IMR-90 (cell line): ENCODE measurements at regions of chr15 and their contacts with region 1.

Region 1: DNA sequence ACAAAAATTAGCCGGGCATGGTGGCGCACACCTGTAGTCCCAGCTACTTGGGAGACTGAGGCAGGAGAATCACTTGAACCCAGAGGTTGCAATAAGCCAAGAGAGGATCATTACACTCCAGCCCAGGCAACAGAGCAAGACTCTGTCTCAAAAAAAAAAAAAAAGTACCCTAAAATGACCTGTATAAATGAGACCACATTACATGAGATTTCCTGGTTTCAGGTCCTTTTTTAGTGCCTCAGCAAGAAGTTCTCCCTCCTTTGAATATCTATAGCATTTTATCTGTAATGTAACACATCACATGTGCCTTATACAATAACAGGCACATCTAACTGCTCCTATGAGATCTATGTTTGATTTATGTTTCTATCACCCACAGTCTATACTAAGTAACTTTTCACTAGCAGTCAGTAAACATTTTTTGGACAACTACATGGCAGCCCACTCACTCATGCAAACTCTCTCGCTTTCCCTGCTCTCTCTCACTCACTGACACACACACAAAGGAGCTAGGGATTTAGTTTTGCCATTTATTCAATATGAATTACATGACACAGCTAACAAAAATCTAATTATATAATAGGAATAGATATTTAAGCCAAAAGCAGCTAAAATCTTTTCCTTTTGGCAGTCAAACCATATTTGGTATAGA is 34.1 kb downstream of the ADAM10 start:
- DNase-seq: no peak
- ATAC-seq: no peak
- H3K4me3 ChIP-seq: no peak overlapping the region
- H3K27ac ChIP-seq: no peak overlapping the region
- H3K4me1 ChIP-seq: no peaks in the 10 kb centered on the region; the same call in 1 of the 2 replicates
- H3K27me3 ChIP-seq: no peaks in the 10 kb centered on the region
- CTCF ChIP-seq: no peak
- POLR2A ChIP-seq: no peak
- RAD21 ChIP-seq: no peak

Region 2: GRCh38 chr15:58641660-58642059 is 73.7 kb before region 1 on chr15:
- CTCF ChIA-PET with region 1: no interaction called
- POLR2A ChIA-PET with region 1: no interaction called
- dilution Hi-C with region 1: no loop called
- in situ Hi-C with region 1: no loop called
- intact Hi-C with region 1: no loop called
- DNase-seq: no peak
- ATAC-seq: no peak
- H3K4me3 ChIP-seq: no peak overlapping the region
- H3K27ac ChIP-seq: no peak overlapping the region
- H3K4me1 ChIP-seq: no peaks in the 10 kb centered on the region
- H3K27me3 ChIP-seq: no peaks in the 10 kb centered on the region
- CTCF ChIP-seq: no peak
- POLR2A ChIP-seq: no peak
- RAD21 ChIP-seq: no peak

Region 3: DNA sequence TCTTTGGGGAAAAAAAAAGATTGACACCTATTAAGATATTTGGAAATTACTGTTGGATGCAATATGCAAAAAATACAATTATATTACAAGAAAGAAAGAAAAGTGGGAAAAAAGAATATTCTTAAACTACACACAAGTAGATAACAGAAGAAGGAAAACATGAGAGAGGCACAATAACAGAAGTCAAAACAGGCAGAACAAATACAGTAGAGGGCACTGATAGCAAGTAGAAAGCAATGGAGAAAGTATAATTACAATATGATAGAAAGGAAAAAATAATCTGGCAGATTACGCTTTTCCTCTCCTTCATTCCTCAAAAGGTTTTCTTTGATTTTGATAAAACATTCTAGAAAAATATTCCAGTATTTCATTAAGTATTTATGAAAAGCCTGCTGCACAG is 38.0 kb before region 1 on chr15:
- CTCF ChIA-PET with region 1: no interaction called
- POLR2A ChIA-PET with region 1: no interaction called
- dilution Hi-C with region 1: no loop called
- in situ Hi-C with region 1: no loop called
- intact Hi-C with region 1: loop called (anchors 5 kb)
- DNase-seq: no peak
- ATAC-seq: no peak
- H3K4me3 ChIP-seq: no peak overlapping the region
- H3K27ac ChIP-seq: no peak overlapping the region
- H3K4me1 ChIP-seq: 0 out of 2 replicates have a peak, but pooled peaks cover 2% of the 10 kb centered on the region
- H3K27me3 ChIP-seq: no peaks in the 10 kb centered on the region
- CTCF ChIP-seq: no peak
- POLR2A ChIP-seq: no peak
- RAD21 ChIP-seq: no peak

Region 4: DNA sequence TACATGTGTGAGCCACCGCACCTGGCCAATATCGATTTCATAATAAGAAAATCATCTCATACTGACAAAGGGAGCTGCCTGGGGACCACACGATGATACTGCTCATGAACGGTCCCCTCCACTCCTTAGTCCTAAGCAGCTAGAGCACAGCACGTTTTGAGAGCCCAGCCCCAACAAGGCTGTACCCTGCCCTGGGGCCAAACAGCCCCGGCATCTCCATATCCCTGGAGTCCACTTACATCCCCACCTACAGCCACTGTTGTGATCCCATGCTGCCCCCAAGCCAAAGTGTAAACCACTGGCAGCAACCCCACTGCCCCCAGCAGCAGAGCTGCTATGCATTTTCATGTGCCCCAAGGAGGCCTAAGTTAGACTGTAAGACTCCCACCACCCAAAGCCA is 18.7 kb before region 1 on chr15:
- CTCF ChIA-PET with region 1: no interaction called
- POLR2A ChIA-PET with region 1: no interaction called
- dilution Hi-C with region 1: no loop called
- in situ Hi-C with region 1: no loop called
- intact Hi-C with region 1: loop called (anchors 2 kb)
- DNase-seq: no peak
- ATAC-seq: no peak
- H3K4me3 ChIP-seq: no peak overlapping the region
- H3K27ac ChIP-seq: no peak overlapping the region
- H3K4me1 ChIP-seq: no peaks in the 10 kb centered on the region; the same call in 1 of the 2 replicates
- H3K27me3 ChIP-seq: no peaks in the 10 kb centered on the region
- CTCF ChIP-seq: no peak
- POLR2A ChIP-seq: no peak
- RAD21 ChIP-seq: no peak

Region 5: DNA sequence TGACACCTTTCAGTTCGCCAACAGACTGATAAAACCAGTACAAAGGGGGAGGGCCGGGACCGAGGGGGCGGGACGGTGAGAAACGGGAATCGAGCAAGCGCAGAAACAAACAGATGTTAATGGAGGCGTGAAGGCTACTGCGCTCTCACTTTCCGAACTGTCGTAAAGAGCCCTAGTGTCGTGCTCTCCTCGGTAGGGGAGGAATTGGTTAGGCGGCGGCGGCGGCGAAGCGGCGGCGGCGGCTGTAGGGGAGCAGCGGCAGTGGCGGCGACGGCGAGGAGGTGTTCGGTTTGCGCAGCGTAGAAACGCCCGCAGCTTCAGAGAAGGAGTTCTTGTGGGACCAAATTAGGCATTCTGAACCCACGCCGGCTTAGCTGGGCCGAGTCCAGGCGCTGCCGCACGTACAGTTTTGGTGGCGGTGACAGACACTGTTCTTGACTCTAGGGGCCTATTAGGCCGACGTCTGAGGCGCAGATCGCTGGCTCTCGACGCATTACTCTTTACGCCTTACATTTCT is 272.2 kb after region 1 on chr15 and contains the start of gene RNF111:
- CTCF ChIA-PET with region 1: no interaction called
- POLR2A ChIA-PET with region 1: no interaction called
- dilution Hi-C with region 1: no loop called
- in situ Hi-C with region 1: no loop called
- intact Hi-C with region 1: no loop called
- DNase-seq: peak; percentile 97
- ATAC-seq: peak; percentile 93
- H3K4me3 ChIP-seq: peak within 1 kb of the TSS; percentile 98
- H3K27ac ChIP-seq: peak within 1 kb of the TSS; percentile 97
- H3K4me1 ChIP-seq: no peaks in the 10 kb centered on the region
- H3K27me3 ChIP-seq: no peaks in the 10 kb centered on the region
- CTCF ChIP-seq: no peak
- POLR2A ChIP-seq: peak; percentile 29; the same call in 1 of the 2 replicates
- RAD21 ChIP-seq: no peak
- total RNA-seq, gene RNF111: 17.2 and 20.1 TPM in 2 replicates